ENCODE measurements at regions of chr1 and their contacts with region 1.

Region 1: DNA sequence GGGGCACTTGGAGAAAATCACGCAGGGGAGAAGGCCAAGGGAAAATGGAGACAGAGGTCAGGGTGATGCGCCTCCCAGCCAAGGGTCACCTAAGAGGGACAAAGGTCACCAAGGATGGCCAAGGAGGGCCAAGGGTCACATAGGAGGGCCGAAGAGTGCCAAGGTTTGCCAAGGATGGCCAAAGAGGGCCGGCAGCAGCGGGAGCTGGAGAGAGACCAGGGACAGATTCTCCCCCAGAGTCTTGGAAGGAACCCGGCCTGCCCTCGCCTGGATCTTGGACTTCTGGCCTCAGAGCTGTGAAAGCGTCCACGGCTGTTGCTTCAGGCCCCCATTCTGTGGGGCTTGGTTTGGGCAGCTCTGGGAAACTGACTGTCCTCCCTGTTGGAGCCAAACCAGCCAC is 25.6 kb upstream of the ARHGEF16 start:
- DNase-seq: peak in 1 of 2 donors; percentile 6
- ATAC-seq: no peak
- H3K4me3 ChIP-seq: no peak overlapping the region
- H3K27ac ChIP-seq: no peak overlapping the region
- H3K4me1 ChIP-seq: peaks cover 0 to 10% (median 9%) of the 10 kb centered on the region in 9 donors
- H3K27me3 ChIP-seq: no peaks in the 10 kb centered on the region
- CTCF ChIP-seq: no peak

Region 2: GRCh38 chr1:2821966-2822620 is 606.8 kb before region 1 on chr1:
- intact Hi-C with region 1: loop called in 7 of 10 experiments (anchors 2 to 10 kb)
- DNase-seq: peak; percentile 32 to 62
- ATAC-seq: peak; percentile 62 to 82 (median 78)
- H3K4me3 ChIP-seq: no peak overlapping the region
- H3K27ac ChIP-seq: no peak overlapping the region
- H3K4me1 ChIP-seq: no peaks in the 10 kb centered on the region
- H3K27me3 ChIP-seq: peaks cover 0 to 46% (median 16%) of the 10 kb centered on the region in 7 donors
- CTCF ChIP-seq: peak; percentile 56 to 75 (median 65)

Region 3: GRCh38 chr1:2845869-2846268 is 583.0 kb before region 1 on chr1:
- intact Hi-C with region 1: no loop called
- DNase-seq: no peak
- ATAC-seq: no peak
- H3K4me3 ChIP-seq: no peak overlapping the region
- H3K27ac ChIP-seq: no peak overlapping the region
- H3K4me1 ChIP-seq: no peaks in the 10 kb centered on the region
- H3K27me3 ChIP-seq: peaks cover 0 to 27% (median 15%) of the 10 kb centered on the region in 7 donors
- CTCF ChIP-seq: no peak

Region 4: GRCh38 chr1:3004285-3005205 is 424.4 kb before region 1 on chr1:
- intact Hi-C with region 1: loop called in 1 of 10 experiments (anchors 5 kb)
- DNase-seq: no peak
- ATAC-seq: no peak
- H3K4me3 ChIP-seq: no peak overlapping the region
- H3K27ac ChIP-seq: no peak overlapping the region
- H3K4me1 ChIP-seq: no peaks in the 10 kb centered on the region
- H3K27me3 ChIP-seq: peaks cover 0 to 65% (median 24%) of the 10 kb centered on the region in 7 donors
- CTCF ChIP-seq: no peak

Region 5: GRCh38 chr1:3012456-3013291 is 416.2 kb before region 1 on chr1:
- intact Hi-C with region 1: loop called in 8 of 10 experiments (anchors 1 to 5 kb)
- DNase-seq: peak; percentile 41 to 73
- ATAC-seq: peak; percentile 58 to 85 (median 82)
- H3K4me3 ChIP-seq: no peak overlapping the region
- H3K27ac ChIP-seq: no peak overlapping the region
- H3K4me1 ChIP-seq: peaks cover 0 to 13% (median 2%) of the 10 kb centered on the region in 9 donors
- H3K27me3 ChIP-seq: peaks cover 3 to 72% (median 45%) of the 10 kb centered on the region in 7 donors
- CTCF ChIP-seq: peak; percentile 76 to 90 (median 81)

Region 6: GRCh38 chr1:3054474-3054873 is 374.4 kb before region 1 on chr1:
- intact Hi-C with region 1: no loop called
- DNase-seq: no peak
- ATAC-seq: peak in 2 of 8 donors; percentile 11 to 24
- H3K4me3 ChIP-seq: no peak overlapping the region
- H3K27ac ChIP-seq: no peak overlapping the region
- H3K4me1 ChIP-seq: no peaks in the 10 kb centered on the region
- H3K27me3 ChIP-seq: peaks cover 0 to 29% (median 12%) of the 10 kb centered on the region in 7 donors
- CTCF ChIP-seq: no peak

Region 7: GRCh38 chr1:3393024-3393986 is 35.6 kb before region 1 on chr1:
- intact Hi-C with region 1: no loop called
- DNase-seq: peak; percentile 65 to 76
- ATAC-seq: peak; percentile 56 to 88 (median 83)
- H3K4me3 ChIP-seq: peak overlapping the region in 9 of 10 donors; percentile 27 to 58 (median 51)
- H3K27ac ChIP-seq: peak overlapping the region; percentile 58 to 88 (median 79)
- H3K4me1 ChIP-seq: peaks cover 7 to 32% (median 18%) of the 10 kb centered on the region in 9 donors
- H3K27me3 ChIP-seq: peaks cover 0 to 62% (median 23%) of the 10 kb centered on the region in 7 donors
- CTCF ChIP-seq: peak in 1 of 9 donors; percentile 23